ENCODE measurements at regions of chr2 and their contacts with region 1.

Region 1: DNA sequence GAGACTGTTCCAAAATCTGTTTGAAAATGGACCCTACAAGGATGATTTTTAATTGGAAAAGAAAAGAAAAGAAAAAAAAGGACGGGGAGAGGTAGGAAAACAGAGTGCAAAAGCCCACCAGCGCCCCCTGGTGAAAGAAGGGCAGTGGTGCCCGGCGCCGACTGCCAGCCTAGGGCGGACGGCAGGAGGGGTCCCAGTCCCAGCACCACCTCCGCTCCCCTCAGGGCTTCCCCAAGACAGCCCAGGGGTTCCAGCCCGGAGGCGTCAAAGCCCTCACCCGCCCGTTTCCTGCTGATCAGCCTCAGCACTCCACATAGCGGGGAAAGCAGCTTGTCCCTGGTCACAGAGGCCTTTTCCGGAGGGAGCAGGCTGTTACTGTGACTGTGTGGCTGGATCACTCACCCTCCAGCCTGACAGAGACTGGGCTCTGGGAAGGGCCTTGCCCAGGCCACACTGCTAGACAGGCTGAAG is 213.9 kb downstream of the TFCP2L1 start:
- DNase-seq: peak; percentile 79
- CTCF ChIP-seq: peak; percentile 55

Region 2: DNA sequence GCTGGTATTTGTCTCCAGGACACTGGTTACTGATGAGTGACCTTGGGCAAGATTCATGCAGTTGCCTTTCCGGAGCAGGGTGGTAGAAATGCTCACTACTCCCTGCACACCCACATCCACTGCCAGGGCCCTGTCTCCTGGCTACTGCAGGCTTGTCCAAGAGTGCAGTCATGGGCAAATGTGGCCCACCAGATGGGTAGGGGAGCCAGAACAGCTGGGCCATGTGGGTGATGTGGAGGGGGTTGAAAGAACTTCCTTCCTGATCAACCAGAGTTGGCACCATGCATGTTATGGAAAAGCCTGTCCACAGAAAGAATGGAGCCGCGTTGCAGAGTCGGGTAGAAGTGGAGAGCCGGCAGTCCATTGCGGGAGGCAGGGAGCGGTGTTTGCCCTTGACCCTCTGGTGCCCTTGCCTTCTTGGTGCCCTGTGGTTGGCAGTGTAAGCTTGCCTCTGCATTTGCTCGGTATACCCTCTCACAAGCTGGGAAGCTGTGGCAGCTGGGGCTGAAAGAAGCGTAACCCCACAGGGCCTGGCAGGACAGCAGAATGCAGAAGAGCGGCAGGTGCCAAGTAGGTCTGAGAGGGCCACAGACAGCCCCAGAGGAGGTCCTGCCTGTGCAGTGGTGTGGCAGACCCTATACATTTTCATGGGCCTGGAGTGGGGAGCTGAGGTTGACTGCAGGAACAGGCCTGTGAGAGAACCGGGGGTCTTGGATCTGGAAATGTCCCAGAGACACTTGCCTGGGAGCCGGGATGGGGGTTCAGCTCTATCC is 39.3 kb before region 1 on chr2:
- CTCF ChIA-PET with region 1: no interaction called
- POLR2A ChIA-PET with region 1: no interaction called
- DNase-seq: no peak
- CTCF ChIP-seq: no peak

Region 3: GRCh38 chr2:121085801-121086200 is 14.7 kb after region 1 on chr2:
- CTCF ChIA-PET with region 1: interaction called, 174 read pairs
- POLR2A ChIA-PET with region 1: interaction called, 3 read pairs
- DNase-seq: no peak
- CTCF ChIP-seq: no peak